ENCODE measurements at regions of chr15 and their contacts with region 1.

Region 1: DNA sequence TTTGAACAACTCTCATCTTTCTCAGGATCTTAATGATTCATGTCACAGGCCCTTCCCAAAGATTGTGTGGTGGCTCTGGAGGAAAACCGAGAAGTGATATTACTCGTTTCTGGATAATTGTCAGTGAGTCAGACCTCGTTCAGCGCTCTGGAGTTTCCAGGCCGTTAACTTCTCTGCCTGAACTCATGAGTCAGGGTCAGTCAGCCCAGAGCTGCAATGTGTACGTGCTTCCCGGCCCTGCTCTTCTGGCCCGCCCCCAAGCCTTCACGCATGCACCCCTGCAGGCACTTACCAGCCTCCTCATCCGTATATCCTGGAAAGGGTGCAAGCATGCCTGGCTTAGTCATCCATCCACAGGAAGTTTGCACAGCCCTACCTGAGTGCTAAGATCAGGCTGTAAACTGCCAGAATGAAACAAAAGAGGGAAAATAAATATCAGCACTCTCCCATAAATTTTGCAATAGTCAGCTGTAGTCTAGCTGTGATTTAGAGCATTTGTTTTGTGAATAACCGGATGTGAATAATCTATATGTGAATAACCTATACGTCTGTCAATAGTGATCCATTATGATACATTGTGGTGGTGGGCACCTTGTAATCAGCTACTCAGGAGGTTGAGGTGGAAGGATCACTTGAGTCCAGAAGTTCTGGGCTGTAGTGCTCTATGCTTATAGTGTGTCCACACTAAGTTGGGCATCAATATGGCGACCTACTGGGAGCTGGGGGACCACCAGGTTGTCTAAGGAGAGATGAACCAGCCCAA is 35.3 kb upstream of the SEMA4B start:
- DNase-seq: peak; percentile 64
- ATAC-seq: peak; percentile 74
- H3K4me3 ChIP-seq: no peak overlapping the region
- H3K27ac ChIP-seq: peak overlapping the region; percentile 48
- H3K4me1 ChIP-seq: peaks cover 34% of the 10 kb centered on the region
- H3K27me3 ChIP-seq: no peaks in the 10 kb centered on the region
- CTCF ChIP-seq: no peak
- EP300 ChIP-seq: no peak
- POLR2A ChIP-seq: no peak
- RAD21 ChIP-seq: no peak

Region 2: DNA sequence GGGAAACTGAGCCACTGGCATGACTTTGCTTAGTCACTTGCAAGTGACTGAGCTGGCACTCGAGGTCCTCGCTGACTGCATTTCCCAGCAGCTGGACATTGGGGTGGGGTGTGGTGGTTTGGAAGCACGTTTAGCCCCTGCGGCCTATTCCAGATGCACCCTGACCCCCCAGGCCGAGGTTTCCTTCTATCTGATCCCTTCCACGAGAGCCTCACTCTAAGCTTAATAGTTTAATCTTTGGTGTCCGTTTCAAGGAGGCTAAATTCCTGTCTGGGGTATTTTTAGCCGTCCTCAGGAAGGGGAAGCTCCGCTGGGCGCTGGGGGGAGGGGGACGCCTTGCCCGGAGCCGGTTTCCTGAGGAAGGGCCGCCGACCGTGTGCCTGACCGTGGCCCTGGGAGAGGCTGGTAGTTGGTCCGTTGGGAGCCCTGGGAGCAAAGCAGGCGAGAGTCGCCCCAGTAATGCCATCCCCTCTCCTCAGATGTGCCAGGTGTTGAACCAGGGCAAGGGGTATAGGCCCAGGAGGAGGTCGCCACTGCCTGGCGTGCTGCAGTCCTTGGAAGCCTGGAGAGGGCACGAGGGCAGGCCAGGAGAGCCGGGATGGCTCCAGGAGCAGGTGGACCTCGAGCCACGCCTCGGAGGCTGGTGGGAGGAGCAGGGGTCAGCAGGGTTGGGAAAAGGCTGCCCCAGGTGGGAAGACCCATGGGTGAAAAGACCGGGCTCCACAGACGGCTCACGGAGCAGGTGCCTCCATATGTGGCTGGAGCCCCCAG is 100.7 kb before region 1 on chr15:
- CTCF ChIA-PET with region 1: no interaction called
- POLR2A ChIA-PET with region 1: no interaction called
- RAD21 ChIA-PET with region 1: no interaction called
- SMC1A ChIA-PET with region 1: no interaction called
- in situ Hi-C with region 1: no loop called
- intact Hi-C with region 1: no loop called
- DNase-seq: no peak
- ATAC-seq: no peak
- H3K4me3 ChIP-seq: no peak overlapping the region
- H3K27ac ChIP-seq: no peak overlapping the region
- H3K4me1 ChIP-seq: peaks cover 37% of the 10 kb centered on the region
- H3K27me3 ChIP-seq: no peaks in the 10 kb centered on the region
- CTCF ChIP-seq: no peak
- EP300 ChIP-seq: no peak
- POLR2A ChIP-seq: no peak
- RAD21 ChIP-seq: no peak

Region 3: GRCh38 chr15:90099868-90100831 is 65.7 kb before region 1 on chr15:
- CTCF ChIA-PET with region 1: no interaction called
- POLR2A ChIA-PET with region 1: no interaction called
- RAD21 ChIA-PET with region 1: no interaction called
- SMC1A ChIA-PET with region 1: no interaction called
- in situ Hi-C with region 1: no loop called
- intact Hi-C with region 1: no loop called
- DNase-seq: no peak
- ATAC-seq: peak; percentile 15
- H3K4me3 ChIP-seq: peak overlapping the region; percentile 79
- H3K27ac ChIP-seq: peak overlapping the region; percentile 91
- H3K4me1 ChIP-seq: peaks cover 52% of the 10 kb centered on the region
- H3K27me3 ChIP-seq: no peaks in the 10 kb centered on the region
- CTCF ChIP-seq: no peak
- EP300 ChIP-seq: 0 out of 4 replicates have a peak, but pooled peaks of 1 of the 2 experiments have one; percentile 23
- POLR2A ChIP-seq: no peak
- RAD21 ChIP-seq: no peak

Region 4: DNA sequence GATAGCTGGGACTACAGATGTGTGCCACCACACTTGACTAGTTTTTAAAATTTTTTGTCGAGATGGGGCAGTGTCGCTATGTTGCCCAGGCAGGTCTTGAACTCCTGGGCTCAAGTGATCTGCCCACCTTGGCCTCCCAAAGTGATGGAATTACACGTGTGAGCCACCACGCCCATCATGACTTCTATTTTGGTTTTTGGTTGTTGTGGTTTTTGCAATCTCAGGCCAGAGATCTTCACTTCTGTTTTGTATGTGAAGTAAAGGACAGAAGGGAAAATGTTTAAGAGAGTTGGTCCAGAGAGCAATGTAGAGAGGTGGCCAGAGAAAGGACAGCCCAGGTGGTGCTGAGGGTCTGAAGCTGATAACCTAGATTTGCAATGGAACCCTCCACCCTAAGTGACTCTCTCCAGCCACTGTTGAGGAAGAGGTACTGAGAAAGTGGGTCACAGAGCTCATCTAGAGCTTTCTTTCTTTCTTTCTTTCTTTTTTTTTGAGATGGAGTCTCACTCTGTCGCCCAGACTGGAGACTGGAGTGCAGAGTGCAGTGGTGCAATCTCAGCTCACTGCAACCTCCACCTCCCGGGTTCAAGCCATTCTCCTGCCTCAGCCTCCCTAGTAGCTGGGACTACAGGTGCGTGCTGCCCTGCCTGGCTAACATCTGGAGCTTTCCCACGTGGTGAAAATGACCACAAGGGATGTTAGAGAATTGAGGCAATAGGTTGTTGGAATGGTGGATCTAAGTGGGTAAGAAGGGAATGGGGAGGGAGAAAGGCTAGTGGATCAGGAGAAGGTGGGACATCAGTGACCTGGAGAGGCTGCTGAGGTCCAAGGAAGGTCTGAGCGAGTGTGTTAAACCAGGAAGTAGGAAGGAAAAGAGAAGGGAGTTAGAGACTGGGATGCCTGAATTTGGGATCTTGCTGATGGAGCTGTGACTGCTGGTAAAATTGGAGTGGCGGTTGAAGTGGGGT is 12.9 kb after region 1 on chr15:
- CTCF ChIA-PET with region 1: interaction called, 11 read pairs
- POLR2A ChIA-PET with region 1: interaction called, 9 read pairs
- RAD21 ChIA-PET with region 1: interaction called, 21 read pairs
- SMC1A ChIA-PET with region 1: interaction called, 58 read pairs
- in situ Hi-C with region 1: no loop called
- intact Hi-C with region 1: no loop called
- DNase-seq: peak; percentile 64
- ATAC-seq: peak; percentile 87
- H3K4me3 ChIP-seq: peak overlapping the region; percentile 54
- H3K27ac ChIP-seq: peak overlapping the region; percentile 62
- H3K4me1 ChIP-seq: peaks cover 23% of the 10 kb centered on the region
- H3K27me3 ChIP-seq: no peaks in the 10 kb centered on the region
- CTCF ChIP-seq: no peak
- EP300 ChIP-seq: no peak
- POLR2A ChIP-seq: no peak
- RAD21 ChIP-seq: no peak

Region 5: GRCh38 chr15:90191794-90192509 is 26.1 kb after region 1 on chr15:
- CTCF ChIA-PET with region 1: interaction called, 22 read pairs
- POLR2A ChIA-PET with region 1: interaction called, 7 read pairs
- RAD21 ChIA-PET with region 1: interaction called, 43 read pairs
- SMC1A ChIA-PET with region 1: interaction called, 47 read pairs
- in situ Hi-C with region 1: no loop called
- intact Hi-C with region 1: no loop called
- DNase-seq: peak; percentile 70
- ATAC-seq: peak; percentile 92
- H3K4me3 ChIP-seq: peak overlapping the region; percentile 57; the same call in 1 of the 2 replicates
- H3K27ac ChIP-seq: peak overlapping the region; percentile 65
- H3K4me1 ChIP-seq: peaks cover 41% of the 10 kb centered on the region
- H3K27me3 ChIP-seq: no peaks in the 10 kb centered on the region
- CTCF ChIP-seq: no peak
- EP300 ChIP-seq: no peak
- POLR2A ChIP-seq: peak; percentile 61
- RAD21 ChIP-seq: no peak

Region 6: DNA sequence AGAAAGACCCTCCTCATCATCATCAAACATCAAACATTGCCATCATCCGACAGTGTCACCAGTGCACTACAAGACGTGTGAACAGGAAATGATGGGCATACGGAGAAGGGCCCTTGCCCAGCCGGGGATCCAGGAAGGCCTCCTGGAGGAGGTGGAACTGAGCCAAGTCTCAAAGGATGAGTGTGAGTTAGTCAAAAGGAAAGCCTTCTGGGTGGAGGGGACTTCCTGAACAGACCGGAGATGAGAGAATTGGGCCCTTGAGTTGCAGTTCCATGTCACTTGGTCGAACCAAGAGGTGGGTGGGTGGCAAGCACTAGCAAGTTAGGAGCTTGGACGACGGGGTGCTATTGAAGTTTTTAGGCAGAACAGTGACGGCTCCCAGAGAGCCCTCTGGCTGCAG is 43.8 kb after region 1 on chr15:
- CTCF ChIA-PET with region 1: interaction called, 5 read pairs
- POLR2A ChIA-PET with region 1: interaction called, 4 read pairs
- RAD21 ChIA-PET with region 1: interaction called, 14 read pairs
- SMC1A ChIA-PET with region 1: interaction called, 10 read pairs
- in situ Hi-C with region 1: no loop called
- intact Hi-C with region 1: loop called (anchors 5 kb)
- DNase-seq: peak; percentile 57
- ATAC-seq: peak; percentile 87
- H3K4me3 ChIP-seq: no peak overlapping the region
- H3K27ac ChIP-seq: peak overlapping the region; percentile 56
- H3K4me1 ChIP-seq: peaks cover 25% of the 10 kb centered on the region
- H3K27me3 ChIP-seq: no peaks in the 10 kb centered on the region
- CTCF ChIP-seq: no peak
- EP300 ChIP-seq: 0 out of 4 replicates have a peak, but pooled peaks of 1 of the 2 experiments have one; percentile 36
- POLR2A ChIP-seq: no peak
- RAD21 ChIP-seq: no peak

Region 7: DNA sequence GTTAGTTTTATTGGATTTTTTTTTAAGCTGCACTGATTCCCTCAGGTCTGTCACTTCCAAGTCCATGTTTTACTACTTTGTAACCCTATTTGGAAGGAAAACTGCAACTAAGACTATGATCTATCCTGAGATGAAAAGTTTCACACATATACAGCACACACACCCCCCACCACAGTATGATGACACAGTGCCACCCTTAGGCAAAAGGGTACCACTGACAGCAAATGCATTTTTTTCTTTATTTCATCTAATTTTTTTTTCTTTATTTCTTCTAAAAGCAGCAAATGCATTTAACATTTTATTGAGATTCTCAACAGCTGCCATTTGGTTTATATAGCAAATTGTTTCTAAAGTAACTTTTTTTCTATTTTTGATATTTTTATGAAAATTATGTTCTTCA is 120.8 kb after region 1 on chr15:
- CTCF ChIA-PET with region 1: interaction called, 22 read pairs
- POLR2A ChIA-PET with region 1: no interaction called
- RAD21 ChIA-PET with region 1: interaction called, 11 read pairs
- SMC1A ChIA-PET with region 1: interaction called, 7 read pairs
- in situ Hi-C with region 1: loop called (anchors 5 kb)
- intact Hi-C with region 1: no loop called
- DNase-seq: no peak
- ATAC-seq: peak; percentile 92
- H3K4me3 ChIP-seq: no peak overlapping the region
- H3K27ac ChIP-seq: no peak overlapping the region
- H3K4me1 ChIP-seq: no peaks in the 10 kb centered on the region
- H3K27me3 ChIP-seq: no peaks in the 10 kb centered on the region
- CTCF ChIP-seq: peak; percentile 54 to 80 (median 61); a peak in 5 of 6 replicates
- EP300 ChIP-seq: no peak
- POLR2A ChIP-seq: no peak
- RAD21 ChIP-seq: peak; percentile 90